ENCODE measurements at regions of chr1 and their contacts with region 1.

Region 1: DNA sequence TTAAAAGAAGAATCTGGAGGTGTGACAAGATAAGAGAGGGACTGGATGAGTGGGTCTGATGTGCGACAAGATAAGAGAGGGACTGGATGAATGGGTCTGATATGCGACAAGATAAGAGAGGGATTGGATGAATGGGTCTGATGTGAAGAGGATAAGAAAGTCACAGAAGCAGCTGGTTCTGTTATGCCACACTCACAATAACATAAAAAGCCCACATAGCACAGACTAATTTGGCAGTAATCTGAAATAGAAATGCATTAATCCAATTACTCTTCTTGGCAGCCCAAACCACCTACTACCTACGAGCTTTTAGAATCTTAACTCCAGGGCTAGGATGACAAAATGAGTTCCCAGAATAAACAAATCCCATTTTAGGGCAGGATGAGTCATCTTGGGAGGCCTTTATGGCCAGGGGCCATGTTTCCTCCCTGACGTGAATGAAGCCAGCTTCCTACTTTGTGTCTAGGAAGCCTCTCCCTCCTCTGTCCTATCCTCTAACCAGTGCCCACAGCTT is 129.6 kb downstream of the DUSP10 start:
- DNase-seq: no peak
- ATAC-seq: no peak
- H3K4me3 Mint-ChIP-seq: no peak overlapping the region
- H3K27ac Mint-ChIP-seq: no peak overlapping the region
- H3K4me1 Mint-ChIP-seq: no peaks in the 10 kb centered on the region
- H3K27me3 Mint-ChIP-seq: no peaks in the 10 kb centered on the region
- CTCF ChIP-seq: no peak

Region 2: GRCh38 chr1:221487781-221488524 is 124.4 kb before region 1 on chr1:
- CTCF ChIA-PET with region 1: no interaction called
- POLR2A ChIA-PET with region 1: no interaction called
- intact Hi-C with region 1: loop called (anchors 10 kb)
- DNase-seq: no peak
- ATAC-seq: no peak
- H3K4me3 Mint-ChIP-seq: no peak overlapping the region
- H3K27ac Mint-ChIP-seq: no peak overlapping the region
- H3K4me1 Mint-ChIP-seq: no peaks in the 10 kb centered on the region
- H3K27me3 Mint-ChIP-seq: no peaks in the 10 kb centered on the region
- CTCF ChIP-seq: no peak

Region 3: DNA sequence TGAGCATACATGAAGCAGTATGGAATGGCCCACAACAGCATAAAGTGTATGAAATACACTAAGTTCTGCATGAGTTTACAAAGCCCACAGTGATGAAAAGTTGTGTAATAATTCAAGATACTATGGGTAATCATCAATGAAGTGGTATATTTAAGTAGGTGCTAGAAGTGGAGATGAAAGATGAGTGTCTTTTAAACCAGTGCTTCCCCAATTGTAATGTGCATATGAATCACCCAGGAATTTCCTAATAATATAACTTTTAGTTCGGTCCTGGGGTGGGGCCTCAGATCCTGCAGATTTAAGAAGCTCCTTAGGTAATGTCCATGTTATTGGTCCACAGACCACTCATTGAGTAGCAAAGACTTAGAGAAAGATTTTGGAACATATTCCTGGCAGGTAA is 55.3 kb before region 1 on chr1:
- CTCF ChIA-PET with region 1: no interaction called
- POLR2A ChIA-PET with region 1: no interaction called
- intact Hi-C with region 1: loop called (anchors 10 kb)
- DNase-seq: no peak
- ATAC-seq: no peak
- H3K4me3 Mint-ChIP-seq: no peak overlapping the region
- H3K27ac Mint-ChIP-seq: no peak overlapping the region
- H3K4me1 Mint-ChIP-seq: no peaks in the 10 kb centered on the region
- H3K27me3 Mint-ChIP-seq: peaks cover 2% of the 10 kb centered on the region
- CTCF ChIP-seq: no peak

Region 4: DNA sequence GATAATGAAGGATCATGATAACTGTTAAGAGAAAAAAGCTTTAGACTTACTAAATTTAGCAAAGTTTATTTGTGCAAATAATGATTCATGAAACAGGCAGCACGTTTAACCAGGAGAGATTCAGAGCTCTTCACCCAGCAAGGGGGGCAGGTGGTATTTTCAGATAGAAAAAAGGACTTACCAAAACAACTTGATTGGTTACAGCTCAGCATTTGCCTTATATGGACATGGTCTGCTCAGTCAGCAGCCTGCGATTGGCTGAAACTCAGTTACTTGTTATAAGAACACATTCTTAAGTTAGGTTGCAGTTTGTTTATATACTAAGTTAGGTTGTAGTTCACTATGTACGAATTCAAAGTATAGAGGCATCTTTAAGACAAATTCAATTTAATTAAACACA is 36.1 kb before region 1 on chr1:
- CTCF ChIA-PET with region 1: no interaction called
- POLR2A ChIA-PET with region 1: no interaction called
- intact Hi-C with region 1: no loop called
- DNase-seq: no peak
- ATAC-seq: no peak
- H3K4me3 Mint-ChIP-seq: no peak overlapping the region
- H3K27ac Mint-ChIP-seq: no peak overlapping the region
- H3K4me1 Mint-ChIP-seq: no peaks in the 10 kb centered on the region
- H3K27me3 Mint-ChIP-seq: no peaks in the 10 kb centered on the region
- CTCF ChIP-seq: no peak